SK-N-SH (cell line): ENCODE measurements at regions of chr11 and their contacts with region 1.

Region 1: GRCh38 chr11:120108154-120108865 is 29.6 kb downstream of the TRIM29 start:
- DNase-seq: peak; percentile 95
- H3K4me3 ChIP-seq: peak overlapping the region in 1 of 2 experiments; percentile 24; a peak in 1 of 4 replicates
- H3K27ac ChIP-seq: peak overlapping the region in 1 of 2 experiments; percentile 56; a peak in 2 of 4 replicates
- H3K4me1 ChIP-seq: peaks cover 0 to 43% of the 10 kb centered on the region in 2 experiments; a peak in 1 of 4 replicates
- H3K27me3 ChIP-seq: peaks cover 17% of the 10 kb centered on the region; the same call in 1 of the 2 replicates
- CTCF ChIP-seq: peak; percentile 98
- EP300 ChIP-seq: no peak
- RAD21 ChIP-seq: peak; percentile 99

Region 2: GRCh38 chr11:119651802-119652584 is 456.3 kb before region 1 on chr11:
- CTCF ChIA-PET with region 1: interaction called, 10 read pairs
- POLR2A ChIA-PET with region 1: no interaction called
- DNase-seq: no peak
- H3K4me3 ChIP-seq: no peak overlapping the region
- H3K27ac ChIP-seq: no peak overlapping the region
- H3K4me1 ChIP-seq: peaks cover 0 to 3% of the 10 kb centered on the region in 2 experiments; a peak in 2 of 4 replicates
- H3K27me3 ChIP-seq: no peaks in the 10 kb centered on the region
- CTCF ChIP-seq: no peak
- EP300 ChIP-seq: no peak
- RAD21 ChIP-seq: no peak

Region 3: GRCh38 chr11:119709638-119710346 is 398.5 kb before region 1 on chr11:
- CTCF ChIA-PET with region 1: interaction called, 13 read pairs
- POLR2A ChIA-PET with region 1: no interaction called
- DNase-seq: peak; percentile 92
- H3K4me3 ChIP-seq: no peak overlapping the region; a peak in 1 of 4 replicates
- H3K27ac ChIP-seq: peak overlapping the region in 1 of 2 experiments; percentile 83; a peak in 2 of 4 replicates
- H3K4me1 ChIP-seq: peaks cover 2 to 61% of the 10 kb centered on the region in 2 experiments; a peak in 2 of 4 replicates
- H3K27me3 ChIP-seq: no peaks in the 10 kb centered on the region
- CTCF ChIP-seq: no peak
- EP300 ChIP-seq: no peak; a peak in 1 of 4 replicates
- RAD21 ChIP-seq: no peak

Region 4: GRCh38 chr11:119774172-119774763 is 334.0 kb before region 1 on chr11:
- CTCF ChIA-PET with region 1: interaction called, 45 read pairs
- POLR2A ChIA-PET with region 1: interaction called, 9 read pairs
- DNase-seq: no peak
- H3K4me3 ChIP-seq: no peak overlapping the region
- H3K27ac ChIP-seq: peak overlapping the region in 1 of 2 experiments; percentile 89; a peak in 1 of 4 replicates
- H3K4me1 ChIP-seq: peaks cover 0 to 78% of the 10 kb centered on the region in 2 experiments; a peak in 2 of 4 replicates
- H3K27me3 ChIP-seq: no peaks in the 10 kb centered on the region
- CTCF ChIP-seq: no peak
- EP300 ChIP-seq: no peak
- RAD21 ChIP-seq: no peak

Region 5: GRCh38 chr11:119979701-119980100 is 128.6 kb before region 1 on chr11:
- CTCF ChIA-PET with region 1: no interaction called
- POLR2A ChIA-PET with region 1: no interaction called
- DNase-seq: no peak
- H3K4me3 ChIP-seq: no peak overlapping the region
- H3K27ac ChIP-seq: no peak overlapping the region
- H3K4me1 ChIP-seq: peaks cover 0 to 40% of the 10 kb centered on the region in 2 experiments; a peak in 2 of 4 replicates
- H3K27me3 ChIP-seq: no peaks in the 10 kb centered on the region; the same call in 1 of the 2 replicates
- CTCF ChIP-seq: no peak
- EP300 ChIP-seq: no peak
- RAD21 ChIP-seq: no peak

Region 6: DNA sequence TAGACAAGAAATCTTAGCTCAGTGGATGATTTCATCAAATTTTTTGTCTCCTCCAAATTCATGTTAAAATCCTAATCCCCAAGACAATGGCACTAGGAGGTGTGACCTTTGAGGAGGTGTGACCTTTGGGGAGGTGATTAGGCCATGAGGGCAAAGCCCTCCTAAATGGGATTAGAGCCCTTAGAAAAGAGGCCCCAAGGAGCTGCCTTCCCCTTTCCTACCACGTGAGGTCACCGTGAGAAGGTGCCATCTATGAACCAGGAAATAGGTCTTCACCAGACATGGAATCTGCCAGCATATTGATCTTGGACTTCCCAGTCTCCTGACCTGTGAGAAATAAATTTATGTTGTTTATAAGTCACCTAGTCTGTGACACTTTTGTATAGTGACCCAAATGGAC is 109.1 kb before region 1 on chr11:
- CTCF ChIA-PET with region 1: interaction called, 37 read pairs
- POLR2A ChIA-PET with region 1: no interaction called
- DNase-seq: no peak
- H3K4me3 ChIP-seq: no peak overlapping the region
- H3K27ac ChIP-seq: no peak overlapping the region
- H3K4me1 ChIP-seq: peaks cover 0 to 35% of the 10 kb centered on the region in 2 experiments; a peak in 2 of 4 replicates
- H3K27me3 ChIP-seq: peaks cover 5% of the 10 kb centered on the region; the same call in 1 of the 2 replicates
- CTCF ChIP-seq: peak; percentile 33
- EP300 ChIP-seq: no peak
- RAD21 ChIP-seq: no peak

Region 7: DNA sequence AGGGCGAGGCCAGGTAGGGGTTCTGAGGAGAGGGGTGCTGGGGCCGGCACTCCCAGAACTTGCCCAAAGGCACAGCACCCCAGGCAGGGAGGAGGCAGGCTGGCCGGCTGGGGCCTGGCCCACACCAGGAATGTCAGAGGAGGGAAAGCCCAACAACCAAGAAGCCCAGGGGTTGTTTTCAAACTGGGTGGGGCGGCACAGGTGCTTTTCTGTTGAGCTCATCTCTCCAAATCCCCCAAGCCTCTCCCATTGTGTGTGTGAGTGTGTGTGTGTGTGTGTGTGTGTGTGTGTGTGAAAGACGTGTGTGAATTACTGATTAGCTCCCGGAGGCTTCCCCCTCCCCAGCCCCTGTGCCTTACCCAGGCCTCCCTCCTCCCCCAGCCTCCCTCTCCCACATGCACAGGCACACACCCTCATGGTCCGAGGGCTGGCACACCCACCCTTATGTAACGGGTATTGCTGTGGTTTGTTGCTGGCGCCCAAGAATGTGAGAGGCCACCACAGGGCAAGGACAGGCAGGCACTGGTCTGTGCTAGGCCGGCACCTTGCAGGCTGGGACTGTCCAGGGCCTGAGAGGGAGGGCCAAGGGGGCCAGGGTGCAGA is 13.7 kb after region 1 on chr11:
- CTCF ChIA-PET with region 1: interaction called, 13 read pairs
- POLR2A ChIA-PET with region 1: interaction called, 4 read pairs
- DNase-seq: no peak
- H3K4me3 ChIP-seq: no peak overlapping the region
- H3K27ac ChIP-seq: no peak overlapping the region
- H3K4me1 ChIP-seq: peaks cover 0 to 9% of the 10 kb centered on the region in 2 experiments; a peak in 1 of 4 replicates
- H3K27me3 ChIP-seq: no peaks in the 10 kb centered on the region
- CTCF ChIP-seq: no peak
- EP300 ChIP-seq: no peak
- RAD21 ChIP-seq: no peak